H1 (cell line): ENCODE measurements at regions of chr2 and their contacts with region 1.

Region 1: GRCh38 chr2:174246944-174247381 is 1.4 kb downstream of the OLA1 start:
- DNase-seq: no peak
- H3K4me3 ChIP-seq: peak overlapping the region in 2 of 4 experiments; percentile 62 to 81; a peak in 4 of 8 replicates
- H3K27ac ChIP-seq: no peak overlapping the region
- H3K4me1 ChIP-seq: peaks cover 0 to 3% (median under 1%) of the 10 kb centered on the region in 4 experiments; a peak in 4 of 7 replicates
- H3K27me3 ChIP-seq: peaks cover 0 to 9% (median 2%) of the 10 kb centered on the region in 4 experiments; a peak in 3 of 7 replicates
- CTCF ChIP-seq: no peak
- EP300 ChIP-seq: no peak
- POLR2A ChIP-seq: no peak
- RAD21 ChIP-seq: no peak

Region 2: DNA sequence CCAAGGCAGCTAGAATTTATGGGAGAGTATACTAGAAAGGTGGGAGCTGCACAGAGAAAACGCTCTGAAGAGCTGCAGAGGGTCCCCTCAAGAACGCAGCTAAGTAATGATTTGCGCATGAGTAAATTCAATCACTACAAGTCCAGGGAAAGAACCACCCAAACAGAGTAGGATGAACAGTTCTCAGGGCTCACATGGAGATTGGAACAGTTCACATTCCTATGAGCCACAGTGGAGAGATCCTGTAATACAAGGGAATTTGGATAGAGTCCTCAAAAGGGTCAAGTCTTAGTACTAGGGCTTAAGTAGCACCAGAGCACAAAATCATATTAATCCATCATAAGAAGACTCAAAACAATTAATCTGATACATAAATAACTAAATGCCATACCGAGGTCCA is 11.3 kb before region 1 on chr2:
- CTCF ChIA-PET with region 1: interaction called, 12 read pairs
- POLR2A ChIA-PET with region 1: interaction called, 5 read pairs
- DNase-seq: no peak
- H3K4me3 ChIP-seq: no peak overlapping the region
- H3K27ac ChIP-seq: no peak overlapping the region
- H3K4me1 ChIP-seq: peaks cover 0 to 5% (median 1%) of the 10 kb centered on the region in 4 experiments; a peak in 2 of 7 replicates
- H3K27me3 ChIP-seq: no peaks in the 10 kb centered on the region
- CTCF ChIP-seq: no peak
- EP300 ChIP-seq: no peak
- POLR2A ChIP-seq: no peak
- RAD21 ChIP-seq: no peak